A549 (cell line): ENCODE measurements at regions of chr17 and their contacts with region 1.

Region 1: GRCh38 chr17:19992803-19993713 is 15.4 kb upstream of the AKAP10 start:
- DNase-seq: peak; percentile 77 to 94
- ATAC-seq: peak; percentile 98 to 100
- H3K4me3 ChIP-seq: peak overlapping the region; percentile 38
- H3K27ac ChIP-seq: peak overlapping the region; percentile 84
- H3K4me1 ChIP-seq: peaks cover 11% of the 10 kb centered on the region
- CTCF ChIP-seq: peak; percentile 97
- EP300 ChIP-seq: no peak
- POLR2A ChIP-seq: no peak
- RAD21 ChIP-seq: peak; percentile 98

Region 2: GRCh38 chr17:19958023-19958422 is 35.0 kb before region 1 on chr17:
- CTCF ChIA-PET with region 1: no interaction called
- POLR2A ChIA-PET with region 1: no interaction called
- DNase-seq: peak; percentile 76 to 89
- ATAC-seq: peak; percentile 98
- H3K4me3 ChIP-seq: no peak overlapping the region
- H3K27ac ChIP-seq: peak overlapping the region; percentile 31 to 82; a peak in 5 of 6 replicates
- H3K4me1 ChIP-seq: peaks cover 46% of the 10 kb centered on the region
- CTCF ChIP-seq: no peak
- EP300 ChIP-seq: no peak
- POLR2A ChIP-seq: no peak
- RAD21 ChIP-seq: no peak

Region 3: DNA sequence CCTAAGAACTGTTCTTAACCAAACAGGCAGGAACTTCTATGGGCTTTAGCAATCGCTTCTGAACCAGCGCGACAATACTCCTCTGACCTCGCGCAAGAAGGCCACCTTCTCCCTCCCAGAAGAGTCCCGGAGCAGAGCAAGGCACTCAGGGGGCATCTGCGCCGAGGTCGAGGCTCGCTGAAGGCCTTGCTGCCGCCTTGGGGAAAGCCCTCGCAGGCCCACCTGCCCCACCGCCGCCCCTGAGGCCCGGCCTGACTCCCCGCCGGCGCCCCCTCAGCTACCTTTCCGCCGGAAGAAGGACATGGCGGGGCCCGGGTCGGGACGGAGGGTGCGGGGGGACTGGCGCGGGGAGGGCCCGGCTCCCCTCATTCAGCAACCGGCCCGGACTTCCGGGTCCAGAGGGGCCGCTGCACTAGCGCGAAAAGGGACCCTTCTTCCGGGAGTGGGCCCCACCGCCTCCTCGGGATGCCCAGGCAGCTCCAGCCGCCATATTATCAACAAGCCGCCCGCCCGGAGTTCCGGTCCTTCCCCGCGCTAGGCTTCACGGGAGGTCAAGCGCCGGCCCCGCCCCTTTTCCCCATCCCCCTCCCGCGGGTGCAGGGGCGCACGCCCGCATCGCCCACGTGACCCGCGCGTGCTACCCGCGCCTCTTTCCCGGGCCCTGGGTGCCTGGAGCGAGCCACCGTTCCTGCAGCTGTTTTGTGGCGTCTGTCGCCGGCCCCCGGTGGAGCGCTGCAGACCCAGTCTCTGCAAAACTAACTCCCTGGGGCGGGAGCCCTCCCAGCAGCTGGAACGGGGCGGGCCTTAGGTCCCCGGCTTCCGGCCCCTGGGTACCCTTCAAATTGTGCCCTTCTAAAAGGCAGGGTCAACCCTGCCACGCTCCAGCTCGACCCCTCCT is 15.5 kb before region 1 on chr17 and contains the start of gene AKAP10:
- CTCF ChIA-PET with region 1: interaction called, 65 read pairs
- POLR2A ChIA-PET with region 1: interaction called, 5 read pairs
- DNase-seq: peak; percentile 89 to 90
- ATAC-seq: peak; percentile 94 to 96
- H3K4me3 ChIP-seq: peak within 1 kb of the TSS; percentile 76
- H3K27ac ChIP-seq: peak within 1 kb of the TSS; percentile 85 to 93
- H3K4me1 ChIP-seq: peaks cover 18% of the 10 kb centered on the region
- CTCF ChIP-seq: no peak
- EP300 ChIP-seq: no peak
- POLR2A ChIP-seq: peak; percentile 58
- RAD21 ChIP-seq: peak in 1 of 2 experiments; percentile 25; a peak in 1 of 5 replicates
- polyA plus RNA-seq, gene AKAP10: 51.1 and 52.9 TPM in 2 replicates

Region 4: DNA sequence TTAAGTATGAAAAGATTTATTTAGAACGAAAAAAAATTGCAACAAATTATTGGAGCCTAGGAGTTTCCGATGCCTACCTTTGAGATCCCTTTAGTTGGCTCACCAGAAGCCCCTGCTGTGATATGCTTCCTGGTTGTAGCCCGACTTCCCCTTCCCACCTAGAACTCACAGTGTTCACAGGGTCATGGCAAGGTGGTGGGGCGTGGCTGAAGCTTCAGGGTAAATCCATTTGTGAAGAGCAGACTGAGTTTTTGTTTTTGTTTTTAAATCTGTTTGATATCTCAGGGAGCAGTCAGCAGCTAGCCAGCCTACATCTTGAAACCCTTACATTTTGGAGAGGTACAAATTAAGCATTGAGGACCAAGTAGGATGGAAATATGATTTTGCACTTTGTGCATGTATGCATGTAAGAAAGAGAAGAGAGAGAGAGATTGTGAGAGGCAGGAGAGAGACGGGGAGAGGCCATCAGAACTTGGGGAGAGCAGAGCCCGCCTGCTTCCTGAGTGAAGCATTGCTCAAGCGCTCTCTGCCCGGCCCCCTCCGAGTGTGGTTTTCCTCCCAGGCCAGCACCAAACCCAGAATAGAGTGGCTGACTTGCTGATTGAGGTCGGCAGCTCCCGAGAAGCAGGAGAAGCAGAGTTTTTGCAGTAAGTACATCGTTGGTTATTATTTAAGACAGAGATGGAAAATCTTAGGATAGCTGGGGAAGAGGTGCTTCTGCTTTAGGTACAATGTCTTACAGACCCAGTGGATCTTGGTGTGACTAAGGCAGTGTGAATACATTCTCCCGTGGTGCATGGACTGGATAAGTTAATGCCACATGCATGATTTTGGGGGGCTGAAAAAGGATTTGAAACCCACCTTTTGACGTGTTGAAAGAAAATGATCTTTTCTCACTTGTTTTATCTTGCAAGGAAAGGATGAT is 80.3 kb after region 1 on chr17:
- CTCF ChIA-PET with region 1: interaction called, 14 read pairs
- POLR2A ChIA-PET with region 1: no interaction called
- DNase-seq: no peak
- ATAC-seq: peak in 1 of 2 experiments; percentile 20; a peak in 1 of 6 replicates
- H3K4me3 ChIP-seq: no peak overlapping the region
- H3K27ac ChIP-seq: peak overlapping the region in 1 of 2 experiments; percentile 40; a peak in 2 of 6 replicates
- H3K4me1 ChIP-seq: peaks cover 31% of the 10 kb centered on the region
- CTCF ChIP-seq: no peak
- EP300 ChIP-seq: no peak
- POLR2A ChIP-seq: no peak
- RAD21 ChIP-seq: no peak

Region 5: GRCh38 chr17:20103454-20104446 is 110.7 kb after region 1 on chr17:
- CTCF ChIA-PET with region 1: interaction called, 47 read pairs
- POLR2A ChIA-PET with region 1: no interaction called
- DNase-seq: no peak
- ATAC-seq: peak in 1 of 2 experiments; percentile 46; a peak in 2 of 6 replicates
- H3K4me3 ChIP-seq: no peak overlapping the region
- H3K27ac ChIP-seq: peak overlapping the region; percentile 33 to 51; a peak in 3 of 6 replicates
- H3K4me1 ChIP-seq: peaks cover 9% of the 10 kb centered on the region; the same call in 2 of the 3 replicates
- CTCF ChIP-seq: no peak
- EP300 ChIP-seq: no peak
- POLR2A ChIP-seq: no peak
- RAD21 ChIP-seq: no peak

Region 6: DNA sequence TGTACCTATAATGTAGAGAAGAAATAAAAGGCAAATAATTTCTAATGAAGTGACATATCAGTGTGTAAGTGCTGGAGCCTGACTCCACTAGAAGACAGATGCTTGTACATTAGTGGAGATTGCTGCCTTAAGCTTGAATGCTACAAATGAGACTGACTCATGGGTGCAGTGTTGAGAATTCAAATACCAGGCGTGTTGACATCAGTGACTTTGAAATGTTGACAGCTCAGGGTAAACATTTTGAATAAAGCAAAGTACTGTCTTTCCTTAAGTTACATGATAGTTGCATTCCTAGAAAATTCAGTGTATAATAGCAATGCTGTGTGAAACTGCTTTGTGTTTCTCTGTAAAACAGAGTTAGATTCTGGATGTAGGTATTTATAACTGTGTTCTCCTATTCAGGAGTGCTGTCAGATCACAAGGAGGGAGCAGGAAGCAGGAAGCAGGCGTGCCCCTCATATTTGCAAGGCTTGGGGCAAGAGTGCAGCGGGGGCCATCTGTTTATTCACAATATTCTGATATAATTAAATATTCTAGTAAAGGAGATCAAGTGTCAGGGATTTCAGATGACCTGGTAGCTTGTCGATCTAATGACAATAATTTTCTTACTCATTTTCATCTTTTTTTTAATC is 135.1 kb after region 1 on chr17:
- CTCF ChIA-PET with region 1: interaction called, 82 read pairs
- POLR2A ChIA-PET with region 1: no interaction called
- DNase-seq: peak in 1 of 2 experiments; percentile 19
- ATAC-seq: peak; percentile 34 to 49; a peak in 2 of 6 replicates
- H3K4me3 ChIP-seq: no peak overlapping the region
- H3K27ac ChIP-seq: no peak overlapping the region
- H3K4me1 ChIP-seq: peaks cover 9% of the 10 kb centered on the region
- CTCF ChIP-seq: no peak
- EP300 ChIP-seq: no peak
- POLR2A ChIP-seq: no peak
- RAD21 ChIP-seq: no peak

Region 7: DNA sequence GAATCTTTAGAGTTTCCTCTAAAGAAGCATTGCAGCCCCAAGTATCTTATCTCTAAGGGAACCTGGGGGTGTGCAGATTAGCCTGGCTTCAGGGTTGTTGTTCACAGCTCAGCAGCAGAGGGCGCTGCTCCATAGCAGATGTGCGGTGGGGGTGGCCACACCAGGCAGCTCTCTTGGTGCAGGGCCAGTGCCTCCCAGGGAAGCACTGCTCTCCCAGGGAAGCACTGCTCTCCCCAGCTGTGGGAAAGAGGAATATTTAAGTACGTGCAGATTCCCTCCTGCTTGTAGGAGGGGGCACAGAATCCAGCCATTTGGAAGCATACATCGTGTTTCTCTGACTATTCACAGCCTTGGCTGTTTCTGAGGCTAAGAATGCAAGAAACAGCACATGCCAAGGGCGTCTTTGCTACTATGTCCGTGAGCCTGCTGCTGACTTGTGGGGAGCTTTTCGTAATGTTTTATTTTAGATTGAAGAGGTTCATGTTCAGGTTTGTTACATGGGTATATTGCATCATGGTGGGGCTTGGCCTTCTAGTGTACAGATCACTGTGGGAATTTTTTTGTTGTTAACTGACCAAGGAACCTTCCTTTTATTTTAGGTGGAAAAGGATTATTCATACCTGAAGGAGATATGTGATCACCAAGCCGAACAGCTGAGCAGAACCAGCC is 233.9 kb after region 1 on chr17:
- CTCF ChIA-PET with region 1: interaction called, 14 read pairs
- POLR2A ChIA-PET with region 1: no interaction called
- DNase-seq: peak; percentile 80 to 85
- ATAC-seq: peak; percentile 95 to 97
- H3K4me3 ChIP-seq: no peak overlapping the region
- H3K27ac ChIP-seq: peak overlapping the region; percentile 62 to 83
- H3K4me1 ChIP-seq: peaks cover 64% of the 10 kb centered on the region
- CTCF ChIP-seq: peak; percentile 92
- EP300 ChIP-seq: no peak
- POLR2A ChIP-seq: no peak
- RAD21 ChIP-seq: peak; percentile 89 to 91